Dorsolateral prefrontal cortex (tissue), 120 donors: ENCODE measurements at regions of chr4 and their contacts with region 1.

Region 1: GRCh38 chr4:154618708-154619315 is 6.4 kb upstream of the FGG start:
- DNase-seq: peak; percentile 5 to 81 (median 56)
- H3K4me3 ChIP-seq: no peak overlapping the region
- H3K27ac ChIP-seq: no peak overlapping the region
- H3K27me3 ChIP-seq: no peaks in the 10 kb centered on the region
- CTCF ChIP-seq: peak in 55 of 56 donors; percentile 40 to 88 (median 74)

Region 2: GRCh38 chr4:154551872-154552686 is 66.7 kb before region 1 on chr4:
- intact Hi-C with region 1: loop called (anchors 1 to 5 kb)
- DNase-seq: peak; percentile 63 to 86 (median 73)
- H3K4me3 ChIP-seq: peak overlapping the region in 1 of 59 donors; percentile 17
- H3K27ac ChIP-seq: no peak overlapping the region
- H3K27me3 ChIP-seq: no peaks in the 10 kb centered on the region
- CTCF ChIP-seq: peak; percentile 72 to 96 (median 86)

Region 3: DNA sequence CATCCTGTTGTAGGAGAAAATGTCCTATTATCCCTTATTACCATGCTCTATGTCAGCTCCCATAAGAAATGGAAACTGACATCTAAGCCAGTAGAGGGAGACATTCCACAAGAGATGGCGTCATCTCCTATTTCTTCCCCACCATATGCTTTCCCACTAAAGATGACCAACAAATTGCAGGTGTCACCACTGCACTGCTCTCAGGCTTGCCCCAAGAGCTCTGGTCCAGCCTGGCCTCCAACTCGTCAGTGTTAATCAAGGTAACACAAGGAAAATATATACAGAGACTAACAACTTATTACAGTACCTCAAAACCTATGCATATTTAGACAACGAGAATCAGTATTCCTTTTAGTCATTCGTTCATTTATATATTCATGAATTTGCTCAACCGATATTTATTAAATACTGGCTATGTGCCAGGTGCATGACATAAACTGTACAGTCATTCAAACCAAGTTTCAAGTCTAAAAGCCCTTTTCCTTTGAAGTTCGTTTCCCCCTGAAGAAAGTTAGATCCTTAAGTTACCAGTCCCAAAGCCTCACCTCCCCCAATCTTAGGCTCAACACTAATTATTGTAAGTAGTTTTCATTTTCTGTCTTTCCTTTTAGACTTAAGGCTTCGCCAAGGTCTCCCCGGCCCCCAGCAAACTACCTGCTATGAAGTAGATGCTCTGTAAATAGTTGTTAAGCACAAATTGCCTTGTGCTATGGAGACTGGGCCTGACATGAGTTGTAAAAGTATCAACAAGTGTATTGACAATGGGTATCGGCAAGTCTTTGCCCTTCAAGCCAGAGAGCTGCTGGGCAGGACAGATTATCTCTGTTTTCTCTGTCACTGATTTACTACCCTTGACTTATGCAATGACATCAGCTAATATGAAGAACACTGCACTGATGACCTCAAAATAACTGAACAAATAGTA is 59.1 kb before region 1 on chr4:
- intact Hi-C with region 1: loop called (anchors 2 to 5 kb)
- DNase-seq: no peak
- H3K4me3 ChIP-seq: no peak overlapping the region
- H3K27ac ChIP-seq: no peak overlapping the region
- H3K27me3 ChIP-seq: no peaks in the 10 kb centered on the region
- CTCF ChIP-seq: peak; percentile 20 to 78 (median 57)

Region 4: GRCh38 chr4:154590329-154591006 is 28.3 kb before region 1 on chr4 and contains the start of gene FGA:
- intact Hi-C with region 1: no loop called
- DNase-seq: no peak
- H3K4me3 ChIP-seq: no peak within 1 kb of the TSS
- H3K27ac ChIP-seq: no peak within 1 kb of the TSS
- H3K27me3 ChIP-seq: peaks cover 0 to 11% (median 0%) of the 10 kb centered on the region in 45 donors
- CTCF ChIP-seq: no peak
- total RNA-seq, gene FGA: 0.24 to 0.30 (median 0.30) TPM in 3 of 120 experiments, not detected in the others

Region 5: DNA sequence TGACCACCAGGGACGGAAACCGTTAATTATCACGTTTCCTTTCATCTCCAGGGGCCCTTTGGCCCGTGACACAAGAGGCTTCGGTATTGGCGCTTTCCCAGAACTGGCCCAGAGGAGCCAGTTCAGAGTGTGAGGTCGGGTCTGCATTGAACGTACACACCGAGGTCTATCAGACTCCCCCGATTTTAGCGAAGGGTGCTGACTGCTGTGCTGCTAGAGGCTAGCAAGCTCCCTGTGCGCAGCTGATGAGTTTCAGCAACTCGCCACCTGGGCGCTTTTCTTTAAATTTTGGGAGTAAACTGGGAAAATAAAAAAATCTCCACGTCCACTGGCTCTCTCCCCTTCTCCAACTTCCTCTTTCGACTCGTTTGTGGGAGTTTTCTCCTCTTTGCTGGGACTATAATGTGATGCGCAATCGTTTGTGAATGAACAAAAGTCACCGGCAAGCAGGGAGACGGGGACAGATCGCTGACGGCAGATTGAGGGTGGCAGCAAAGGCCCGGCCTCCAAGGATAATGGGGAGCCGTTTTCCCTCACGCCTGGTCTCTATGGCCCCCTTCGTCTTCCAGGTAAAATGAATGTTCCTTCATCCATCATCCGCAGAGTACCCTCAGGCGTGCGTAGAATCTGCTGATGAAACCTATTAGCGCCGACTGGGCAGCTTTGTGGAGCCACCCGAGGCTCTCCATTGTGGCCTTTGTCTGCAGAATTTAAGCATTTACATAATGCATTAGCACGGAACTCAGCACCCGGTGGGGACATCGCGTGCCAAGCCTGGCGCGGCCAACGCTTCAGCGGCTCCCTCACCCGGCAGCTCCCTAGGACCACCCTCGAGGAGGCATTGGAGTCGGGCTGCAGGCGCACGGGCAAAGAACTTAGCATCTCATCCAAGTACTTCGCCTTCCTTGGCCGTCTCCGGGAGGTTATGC is 123.4 kb after region 1 on chr4:
- intact Hi-C with region 1: no loop called
- DNase-seq: no peak
- H3K4me3 ChIP-seq: peak overlapping the region; percentile 32 to 82 (median 61)
- H3K27ac ChIP-seq: peak overlapping the region in 8 of 59 donors; percentile 6 to 43 (median 22)
- H3K27me3 ChIP-seq: peaks cover 0 to 58% (median 18%) of the 10 kb centered on the region in 45 donors
- CTCF ChIP-seq: peak in 1 of 56 donors; percentile 14

Region 6: DNA sequence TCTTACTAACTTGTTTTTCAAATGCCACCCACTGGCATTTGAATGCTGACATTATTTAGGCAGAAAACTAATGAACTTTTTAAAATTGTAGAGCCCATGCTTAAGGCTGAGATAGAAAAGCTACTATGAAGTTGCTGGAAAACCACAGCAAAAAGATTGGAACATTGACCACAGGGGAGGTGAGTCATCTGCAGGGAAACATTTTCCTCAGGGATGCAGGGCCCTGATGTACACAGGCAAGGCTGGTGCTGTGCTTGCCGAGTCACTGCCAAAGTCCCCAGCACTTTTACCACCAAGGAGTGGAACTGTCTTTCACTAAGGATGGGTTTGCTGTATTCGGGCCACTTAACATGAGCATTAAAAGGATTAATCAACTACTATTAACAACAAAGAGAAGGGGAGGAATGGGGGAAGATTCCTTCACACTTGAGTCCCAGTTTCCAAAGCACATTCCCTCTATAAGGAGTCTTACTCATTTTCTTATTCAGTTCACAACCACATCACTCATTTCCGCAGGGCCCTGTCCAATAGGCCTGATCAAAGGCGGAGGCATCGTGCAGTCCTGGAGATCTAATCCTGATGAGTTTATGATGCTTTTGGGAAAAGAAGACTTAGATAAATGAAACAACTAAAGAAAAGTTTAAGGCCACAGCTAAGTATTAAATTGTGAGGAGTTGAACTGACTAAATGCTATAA is 386.7 kb after region 1 on chr4:
- intact Hi-C with region 1: no loop called
- DNase-seq: no peak
- H3K4me3 ChIP-seq: no peak overlapping the region
- H3K27ac ChIP-seq: no peak overlapping the region
- H3K27me3 ChIP-seq: peaks cover 0 to 12% (median 0%) of the 10 kb centered on the region in 45 donors
- CTCF ChIP-seq: no peak